IMR-90 (cell line): ENCODE measurements at regions of chr1 and their contacts with region 1.

Region 1: GRCh38 chr1:198157241-198157846 is 546 bp downstream of the NEK7 start:
- DNase-seq: peak; percentile 97
- ATAC-seq: peak; percentile 62
- H3K4me3 ChIP-seq: peak overlapping the region; percentile 77
- H3K27ac ChIP-seq: peak overlapping the region; percentile 93
- H3K4me1 ChIP-seq: peaks cover 6% of the 10 kb centered on the region
- H3K27me3 ChIP-seq: no peaks in the 10 kb centered on the region
- CTCF ChIP-seq: no peak
- POLR2A ChIP-seq: no peak; the same call in 1 of the 2 replicates
- RAD21 ChIP-seq: no peak

Region 2: GRCh38 chr1:197614916-197615692 is 542.2 kb before region 1 on chr1:
- CTCF ChIA-PET with region 1: no interaction called
- POLR2A ChIA-PET with region 1: no interaction called
- dilution Hi-C with region 1: no loop called
- in situ Hi-C with region 1: no loop called
- intact Hi-C with region 1: loop called (anchors 2 kb)
- DNase-seq: peak; percentile 51
- ATAC-seq: peak; percentile 91
- H3K4me3 ChIP-seq: no peak overlapping the region
- H3K27ac ChIP-seq: no peak overlapping the region
- H3K4me1 ChIP-seq: 0 out of 2 replicates have a peak, but pooled peaks cover 2% of the 10 kb centered on the region
- H3K27me3 ChIP-seq: no peaks in the 10 kb centered on the region
- CTCF ChIP-seq: peak; percentile 66
- POLR2A ChIP-seq: no peak
- RAD21 ChIP-seq: peak; percentile 78

Region 3: DNA sequence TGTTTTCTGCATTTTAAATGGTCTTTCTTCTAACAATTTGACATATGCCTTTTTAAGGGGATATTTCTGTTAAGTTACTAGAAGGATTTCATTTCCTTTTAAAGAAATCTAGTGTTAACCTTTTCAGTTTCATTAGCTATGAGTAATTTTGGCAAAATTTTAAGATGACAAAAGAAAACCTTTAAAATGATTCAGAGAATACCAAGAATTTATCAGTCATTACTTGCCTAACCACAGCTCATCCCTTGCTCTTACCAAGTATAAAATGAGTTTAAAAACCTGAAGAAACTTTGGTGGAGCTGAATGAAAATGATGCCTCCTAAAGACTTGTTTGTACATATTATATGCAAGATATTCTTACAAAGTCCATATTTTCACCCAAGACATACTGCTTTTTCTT is 101.1 kb after region 1 on chr1:
- CTCF ChIA-PET with region 1: interaction called, 3 read pairs
- POLR2A ChIA-PET with region 1: no interaction called
- dilution Hi-C with region 1: no loop called
- in situ Hi-C with region 1: no loop called
- intact Hi-C with region 1: loop called (anchors 5 kb)
- DNase-seq: peak; percentile 87
- ATAC-seq: peak; percentile 71
- H3K4me3 ChIP-seq: peak overlapping the region; percentile 21; the same call in 1 of the 2 replicates
- H3K27ac ChIP-seq: peak overlapping the region; percentile 83
- H3K4me1 ChIP-seq: peaks cover 2% of the 10 kb centered on the region
- H3K27me3 ChIP-seq: no peaks in the 10 kb centered on the region
- CTCF ChIP-seq: no peak
- POLR2A ChIP-seq: no peak
- RAD21 ChIP-seq: no peak

Region 4: DNA sequence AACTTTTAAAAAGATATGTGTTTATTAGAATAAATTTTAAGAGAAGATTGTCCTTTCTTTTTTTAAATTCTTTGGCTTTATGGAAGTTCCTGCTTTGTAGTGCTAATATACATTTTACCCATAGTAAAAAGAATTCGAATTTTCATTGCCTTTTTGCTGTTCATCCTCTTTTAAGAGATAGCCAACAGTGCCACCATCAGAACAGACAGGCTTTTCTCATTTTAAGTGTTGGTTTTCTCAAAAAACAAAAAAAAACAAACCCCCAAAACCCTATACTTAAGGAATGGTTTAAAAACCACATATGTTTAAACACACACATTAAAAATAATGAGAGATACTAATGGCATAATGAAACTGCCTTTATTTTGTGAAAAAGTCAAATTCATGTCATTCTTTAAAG is 118.3 kb after region 1 on chr1:
- CTCF ChIA-PET with region 1: interaction called, 4 read pairs
- POLR2A ChIA-PET with region 1: no interaction called
- dilution Hi-C with region 1: no loop called
- in situ Hi-C with region 1: no loop called
- intact Hi-C with region 1: loop called (anchors 5 kb)
- DNase-seq: no peak
- ATAC-seq: no peak
- H3K4me3 ChIP-seq: no peak overlapping the region
- H3K27ac ChIP-seq: no peak overlapping the region
- H3K4me1 ChIP-seq: peaks cover 5% of the 10 kb centered on the region
- H3K27me3 ChIP-seq: no peaks in the 10 kb centered on the region
- CTCF ChIP-seq: no peak; the same call in 1 of the 2 replicates
- POLR2A ChIP-seq: no peak
- RAD21 ChIP-seq: 0 out of 2 replicates have a peak, but pooled peaks have one; percentile 21